Head of caudate nucleus (tissue), 42 donors: ENCODE measurements at regions of chr4 and their contacts with region 1.

Region 1: GRCh38 chr4:101347557-101348366 is 436 bp upstream of the PPP3CA start:
- DNase-seq: peak; percentile 98 to 100 (median 100)

Region 2: DNA sequence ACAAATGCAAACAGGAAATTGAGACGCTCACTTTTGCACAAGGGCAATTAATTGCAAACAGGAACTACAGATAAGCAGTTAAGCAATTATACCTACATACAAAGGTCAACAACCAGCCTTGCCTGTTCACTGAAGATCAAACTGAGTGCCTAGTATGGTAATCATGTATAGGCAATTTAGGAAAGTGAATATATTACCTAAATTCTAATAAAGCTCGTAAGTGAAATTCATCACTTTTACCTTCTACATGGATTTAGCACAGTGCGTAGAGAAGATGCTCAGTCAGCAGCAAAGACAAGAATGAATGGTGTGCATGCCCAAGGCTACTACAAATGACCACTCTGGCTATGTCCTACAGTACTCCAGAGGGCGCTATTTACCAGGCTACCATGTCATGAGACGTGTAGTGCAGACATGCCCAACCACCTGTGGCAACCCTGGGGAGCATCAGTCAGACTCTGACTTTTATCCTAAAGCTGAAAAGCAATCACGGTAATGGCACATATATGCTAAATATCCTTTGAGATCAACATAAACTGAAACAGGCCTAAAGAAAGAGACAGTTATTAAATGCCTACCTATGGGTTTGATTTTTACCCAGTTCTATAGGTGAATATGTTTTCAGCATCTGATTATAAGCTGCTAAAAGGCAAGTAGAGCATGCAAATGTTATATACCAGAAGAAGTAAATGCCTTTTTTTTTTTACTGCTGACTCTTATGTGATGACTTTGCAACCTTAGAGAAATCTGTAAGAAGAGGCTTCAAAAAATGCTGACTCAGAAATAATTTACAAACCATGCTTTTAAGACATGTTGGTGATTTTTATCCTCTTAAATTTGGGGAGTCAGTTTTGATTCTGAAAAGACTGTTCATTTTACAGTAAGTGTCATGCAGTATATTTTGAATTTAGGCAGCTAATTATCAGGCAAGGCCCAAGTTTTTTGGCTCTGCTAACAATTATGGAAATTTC is 178.4 kb before region 1 on chr4:
- intact Hi-C with region 1: loop called (anchors 10 kb)
- DNase-seq: peak in 39 of 42 donors; percentile 11 to 86 (median 66)

Region 3: GRCh38 chr4:101191302-101192098 is 156.3 kb before region 1 on chr4:
- intact Hi-C with region 1: loop called (anchors 5 kb)
- DNase-seq: peak; percentile 4 to 84 (median 58)